PC-9 (cell line): ENCODE measurements at regions of chr21 and their contacts with region 1.

Region 1: DNA sequence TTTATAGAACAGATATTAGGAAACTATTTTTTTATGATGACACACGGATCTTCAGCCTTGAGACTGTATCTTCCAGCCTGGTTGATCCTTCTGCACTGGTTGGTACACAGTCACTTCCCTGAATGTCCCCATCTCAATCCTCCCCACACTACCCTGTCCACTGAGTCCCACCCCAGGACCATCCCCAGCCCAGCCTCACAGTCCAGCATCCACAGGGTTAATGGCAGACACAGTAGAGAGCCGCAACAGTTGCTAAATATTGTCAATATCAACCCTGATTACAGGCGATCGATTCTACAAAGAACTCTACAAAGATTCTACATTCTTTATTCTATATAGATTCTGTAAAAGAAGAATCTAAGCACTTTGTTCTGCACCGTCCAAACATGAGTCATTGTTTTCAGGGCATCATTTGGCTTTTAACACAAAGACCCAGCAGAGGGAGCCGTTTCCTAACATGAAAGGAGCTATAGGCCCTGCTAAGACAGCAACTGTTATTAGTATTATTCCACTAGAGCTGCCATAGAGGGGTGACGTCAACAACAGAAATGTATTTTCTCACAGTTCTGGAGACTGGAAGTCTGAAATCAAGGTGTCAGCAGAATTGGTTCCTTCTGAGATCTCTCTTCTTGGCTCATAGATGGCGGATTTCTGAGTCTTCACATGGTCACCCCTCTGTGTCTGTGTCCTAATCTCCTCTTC is 30.1 kb upstream of the IFNAR2 start:
- DNase-seq: peak; percentile 64 to 80
- H3K4me3 ChIP-seq: no peak overlapping the region
- H3K27ac ChIP-seq: no peak overlapping the region
- H3K4me1 ChIP-seq: peaks cover 13% of the 10 kb centered on the region
- H3K27me3 ChIP-seq: no peaks in the 10 kb centered on the region
- CTCF ChIP-seq: peak; percentile 79

Region 2: DNA sequence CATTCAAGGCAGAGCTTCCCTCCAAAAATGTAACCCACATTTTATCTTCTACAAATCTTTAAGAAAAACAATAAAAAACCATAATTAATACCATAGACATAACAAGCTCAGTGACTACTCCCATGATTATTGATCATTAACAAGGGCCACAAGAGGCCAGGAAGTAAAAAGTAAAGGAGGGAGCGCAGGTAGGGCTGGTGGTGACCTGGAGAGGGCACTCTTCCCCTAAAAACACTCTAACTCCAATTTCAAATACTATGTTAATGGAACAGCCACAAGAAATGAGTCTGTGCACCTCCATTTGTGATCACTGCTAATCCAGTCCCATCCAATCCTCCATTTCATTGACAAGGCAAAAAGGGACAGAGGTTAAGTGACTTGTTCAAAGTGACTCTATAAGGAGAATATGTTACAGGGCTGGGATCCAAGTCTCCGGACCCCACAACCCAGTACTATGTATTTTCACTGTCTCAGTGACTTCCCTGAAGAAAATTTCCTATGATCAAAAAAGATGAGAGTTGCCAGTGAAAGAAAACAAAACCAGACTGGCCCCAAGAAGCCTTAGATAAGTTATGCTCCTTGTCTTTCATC is 546.3 kb before region 1 on chr21:
- CTCF ChIA-PET with region 1: no interaction called
- POLR2A ChIA-PET with region 1: no interaction called
- intact Hi-C with region 1: loop called (anchors 2 kb)
- DNase-seq: no peak
- H3K4me3 ChIP-seq: no peak overlapping the region
- H3K27ac ChIP-seq: no peak overlapping the region
- H3K4me1 ChIP-seq: no peaks in the 10 kb centered on the region
- H3K27me3 ChIP-seq: no peaks in the 10 kb centered on the region
- CTCF ChIP-seq: peak; percentile 67

Region 3: DNA sequence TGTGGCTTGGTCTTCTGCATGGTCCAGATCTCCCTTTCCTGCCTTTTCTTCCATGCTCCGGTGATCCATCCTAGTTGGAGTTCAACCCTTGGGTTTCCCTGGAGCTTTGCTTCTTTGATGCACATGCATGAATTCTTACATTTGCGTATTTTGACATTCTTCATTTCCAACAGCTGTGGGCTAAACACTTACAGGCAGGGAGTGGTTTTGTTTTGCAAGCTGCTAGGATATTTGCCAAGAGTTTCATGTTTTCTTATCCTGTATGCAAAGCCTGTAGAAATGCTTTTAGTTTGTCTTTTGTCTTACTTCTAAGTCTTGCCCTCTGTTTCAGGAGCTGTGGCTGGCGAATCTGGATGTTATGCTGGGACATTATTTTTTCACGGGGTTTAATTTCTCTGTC is 337.8 kb before region 1 on chr21:
- CTCF ChIA-PET with region 1: no interaction called
- POLR2A ChIA-PET with region 1: no interaction called
- intact Hi-C with region 1: no loop called
- DNase-seq: no peak
- H3K4me3 ChIP-seq: no peak overlapping the region
- H3K27ac ChIP-seq: no peak overlapping the region
- H3K4me1 ChIP-seq: no peaks in the 10 kb centered on the region
- H3K27me3 ChIP-seq: peaks cover 45% of the 10 kb centered on the region
- CTCF ChIP-seq: no peak

Region 4: DNA sequence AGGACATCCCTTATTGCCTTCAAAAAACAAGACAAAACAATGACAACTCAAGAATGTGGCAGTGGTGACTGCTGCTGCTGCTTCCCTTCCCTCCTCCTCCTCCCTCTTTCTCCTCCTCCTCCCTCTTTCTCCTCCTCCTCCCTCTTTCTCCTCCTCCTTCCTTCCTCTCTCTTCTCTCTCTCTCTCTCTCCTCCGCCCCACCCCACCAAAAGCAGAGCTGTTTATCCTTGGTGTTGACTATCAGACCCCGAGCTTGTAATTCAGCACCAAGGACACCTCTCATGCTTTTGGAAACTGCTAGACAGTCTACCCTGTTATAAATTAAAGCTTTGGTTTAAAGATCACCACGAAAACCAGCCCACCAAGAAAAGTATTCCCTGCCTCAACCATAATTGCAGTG is 42.4 kb before region 1 on chr21:
- CTCF ChIA-PET with region 1: interaction called, 27 read pairs
- POLR2A ChIA-PET with region 1: no interaction called
- intact Hi-C with region 1: no loop called
- DNase-seq: no peak
- H3K4me3 ChIP-seq: no peak overlapping the region
- H3K27ac ChIP-seq: no peak overlapping the region
- H3K4me1 ChIP-seq: no peaks in the 10 kb centered on the region
- H3K27me3 ChIP-seq: peaks cover 50% of the 10 kb centered on the region
- CTCF ChIP-seq: no peak

Region 5: DNA sequence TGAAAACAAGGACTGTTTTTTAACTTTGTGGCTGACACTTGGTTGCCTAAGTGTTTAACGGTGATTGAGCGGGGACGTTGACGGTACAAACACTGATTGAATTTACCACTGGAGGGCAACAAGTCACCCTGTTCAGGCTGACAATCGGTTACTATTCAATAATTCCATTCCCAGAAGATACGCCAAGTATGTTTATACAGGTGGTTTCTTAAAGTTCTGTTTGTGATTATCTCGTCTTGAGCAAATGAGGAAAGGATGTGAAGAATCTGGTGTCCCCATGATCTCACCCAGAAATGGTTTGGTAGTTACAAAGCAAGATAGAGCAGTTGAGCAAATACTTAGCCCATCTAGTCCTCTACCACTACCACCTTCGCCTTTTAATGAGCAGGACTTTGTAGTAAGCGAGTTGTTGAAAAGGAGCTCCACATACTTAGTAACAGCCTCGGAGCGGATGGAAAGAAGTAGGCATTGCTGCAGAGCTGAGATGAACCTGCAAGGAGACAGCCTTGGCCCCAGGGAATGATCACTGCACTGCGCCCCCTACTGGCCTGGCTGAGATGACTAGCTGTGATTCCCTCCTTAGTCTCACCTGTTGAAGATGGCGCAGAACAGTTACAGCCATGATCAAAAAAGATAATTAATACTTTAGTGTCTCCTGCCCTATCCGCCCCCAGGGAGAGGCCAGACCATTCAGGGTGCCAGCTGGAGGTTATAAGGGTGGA is 161.4 kb after region 1 on chr21:
- CTCF ChIA-PET with region 1: interaction called, 6 read pairs
- POLR2A ChIA-PET with region 1: no interaction called
- intact Hi-C with region 1: loop called (anchors 1 kb)
- DNase-seq: peak in 1 of 2 experiments; percentile 66
- H3K4me3 ChIP-seq: no peak overlapping the region
- H3K27ac ChIP-seq: no peak overlapping the region
- H3K4me1 ChIP-seq: 0 out of 2 replicates have a peak, but pooled peaks cover 6% of the 10 kb centered on the region
- H3K27me3 ChIP-seq: no peaks in the 10 kb centered on the region
- CTCF ChIP-seq: peak; percentile 73

Region 6: GRCh38 chr21:33441489-33442477 is 242.1 kb after region 1 on chr21:
- CTCF ChIA-PET with region 1: interaction called, 6 read pairs
- POLR2A ChIA-PET with region 1: no interaction called
- intact Hi-C with region 1: loop called (anchors 1 kb)
- DNase-seq: peak in 1 of 2 experiments; percentile 22
- H3K4me3 ChIP-seq: no peak overlapping the region
- H3K27ac ChIP-seq: no peak overlapping the region
- H3K4me1 ChIP-seq: no peaks in the 10 kb centered on the region
- H3K27me3 ChIP-seq: no peaks in the 10 kb centered on the region
- CTCF ChIP-seq: no peak